A673 (cell line): ENCODE measurements at regions of chr3 and their contacts with region 1.

Region 1: DNA sequence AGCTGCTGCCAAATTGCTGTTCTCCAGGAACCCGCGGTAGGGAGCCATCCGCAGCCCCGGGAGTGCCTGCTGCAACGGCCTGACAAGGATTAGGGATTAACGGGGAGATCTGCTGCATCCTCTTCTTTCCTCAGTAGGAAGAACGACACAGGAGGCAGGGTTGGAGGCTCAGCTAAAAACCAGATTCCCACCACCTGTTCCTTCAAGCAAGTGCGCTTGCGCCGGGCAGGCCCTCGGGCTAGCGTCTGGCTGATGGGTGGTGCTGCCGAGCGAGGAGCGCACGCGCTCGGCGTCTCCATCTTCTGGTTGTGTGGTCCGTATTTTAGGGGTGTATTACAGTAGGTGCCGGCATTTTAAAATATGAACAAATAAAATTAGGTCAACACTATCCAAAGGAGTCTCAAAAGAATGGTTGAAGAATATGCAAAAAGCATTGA is 25.4 kb upstream of the SLC25A26 start:
- DNase-seq: peak; percentile 90
- H3K4me3 ChIP-seq: peak overlapping the region; percentile 43
- H3K27ac ChIP-seq: no peak overlapping the region
- H3K4me1 ChIP-seq: peaks cover 11% of the 10 kb centered on the region
- H3K27me3 ChIP-seq: no peaks in the 10 kb centered on the region
- CTCF ChIP-seq: peak; percentile 43

Region 2: GRCh38 chr3:65342084-65342683 is 853.2 kb before region 1 on chr3:
- CTCF ChIA-PET with region 1: no interaction called
- POLR2A ChIA-PET with region 1: no interaction called
- intact Hi-C with region 1: loop called (anchors 5 kb)
- DNase-seq: peak; percentile 59
- H3K4me3 ChIP-seq: no peak overlapping the region
- H3K27ac ChIP-seq: no peak overlapping the region
- H3K4me1 ChIP-seq: no peaks in the 10 kb centered on the region
- H3K27me3 ChIP-seq: no peaks in the 10 kb centered on the region
- CTCF ChIP-seq: peak; percentile 70

Region 3: DNA sequence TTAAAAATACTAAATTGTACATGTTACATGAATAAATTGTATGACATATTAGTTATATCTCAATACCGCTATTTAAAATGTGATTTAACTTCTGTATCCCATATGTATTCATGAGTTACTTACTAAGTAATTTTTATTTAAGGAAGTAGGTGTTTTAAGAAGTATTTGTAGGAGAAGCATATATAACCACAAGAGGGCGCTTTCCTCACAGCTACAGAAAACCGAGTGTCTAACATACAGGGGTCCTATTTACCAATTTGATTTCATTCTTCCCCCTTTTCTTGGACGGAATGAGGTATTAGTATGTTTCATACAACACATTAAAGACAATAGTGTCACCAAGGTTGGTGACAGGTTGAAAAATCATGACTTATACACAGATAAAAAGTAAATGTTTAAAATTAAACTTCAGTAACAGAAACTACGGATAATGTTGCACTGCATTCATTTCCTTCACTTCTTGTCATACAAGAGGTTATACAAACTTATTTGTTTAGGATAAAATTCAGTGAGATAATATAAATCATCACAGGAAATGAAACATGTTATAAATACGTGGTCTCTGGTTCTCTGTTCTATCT is 410.2 kb before region 1 on chr3:
- CTCF ChIA-PET with region 1: no interaction called
- POLR2A ChIA-PET with region 1: no interaction called
- intact Hi-C with region 1: loop called (anchors 5 kb)
- DNase-seq: peak; percentile 75
- H3K4me3 ChIP-seq: no peak overlapping the region
- H3K27ac ChIP-seq: peak overlapping the region; percentile 57
- H3K4me1 ChIP-seq: peaks cover 39% of the 10 kb centered on the region
- H3K27me3 ChIP-seq: no peaks in the 10 kb centered on the region
- CTCF ChIP-seq: peak; percentile 60

Region 4: DNA sequence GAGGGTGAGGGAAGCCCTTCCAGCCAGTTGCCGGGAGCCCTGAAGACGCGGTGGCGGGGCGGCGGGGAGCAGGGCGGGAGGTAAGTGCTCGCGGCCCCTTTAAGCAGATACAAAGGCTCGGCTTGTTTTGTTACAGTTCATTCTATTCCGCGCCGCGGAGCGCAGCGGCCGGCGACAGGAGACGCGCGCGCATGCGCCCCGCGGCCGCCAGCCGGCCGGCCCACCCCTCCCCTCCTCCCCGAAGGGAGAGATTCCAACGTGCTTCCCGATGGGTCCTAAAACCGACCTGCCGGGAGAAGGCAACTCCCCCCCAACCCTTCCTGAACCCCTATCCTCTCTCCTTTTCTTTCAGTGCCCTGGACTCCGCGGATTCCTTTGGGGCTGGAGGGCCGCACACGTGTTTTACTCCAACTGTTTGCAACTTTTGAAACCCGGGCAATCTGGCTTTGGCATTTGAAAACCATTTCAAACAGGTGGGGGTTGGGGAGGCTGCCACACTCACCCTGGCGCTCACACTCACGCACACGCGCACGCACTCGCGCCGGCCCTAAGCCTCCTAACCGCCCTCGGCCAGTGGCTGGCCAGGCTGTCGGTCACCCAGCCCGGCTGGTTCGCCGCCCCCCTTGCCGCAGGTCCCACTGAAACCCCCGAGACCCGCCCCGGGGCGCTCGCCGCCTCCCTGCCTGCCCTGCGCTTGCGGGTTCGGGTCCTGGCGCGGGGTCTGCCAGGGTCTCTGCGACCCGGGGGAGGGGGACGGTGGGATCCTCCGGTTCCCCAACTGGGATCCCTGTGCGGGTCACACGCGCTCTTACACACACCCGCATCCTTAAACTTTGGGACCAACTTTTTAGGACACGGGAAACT is 156.4 kb before region 1 on chr3 and contains the start of gene MAGI1:
- CTCF ChIA-PET with region 1: no interaction called
- POLR2A ChIA-PET with region 1: no interaction called
- intact Hi-C with region 1: loop called (anchors 10 kb)
- DNase-seq: peak; percentile 91
- H3K4me3 ChIP-seq: peak within 1 kb of the TSS; percentile 85
- H3K27ac ChIP-seq: peak within 1 kb of the TSS; percentile 91
- H3K4me1 ChIP-seq: no peaks in the 10 kb centered on the region
- H3K27me3 ChIP-seq: no peaks in the 10 kb centered on the region
- CTCF ChIP-seq: no peak
- total RNA-seq, gene MAGI1: 30.5 and 36.1 TPM in 2 replicates

Region 5: DNA sequence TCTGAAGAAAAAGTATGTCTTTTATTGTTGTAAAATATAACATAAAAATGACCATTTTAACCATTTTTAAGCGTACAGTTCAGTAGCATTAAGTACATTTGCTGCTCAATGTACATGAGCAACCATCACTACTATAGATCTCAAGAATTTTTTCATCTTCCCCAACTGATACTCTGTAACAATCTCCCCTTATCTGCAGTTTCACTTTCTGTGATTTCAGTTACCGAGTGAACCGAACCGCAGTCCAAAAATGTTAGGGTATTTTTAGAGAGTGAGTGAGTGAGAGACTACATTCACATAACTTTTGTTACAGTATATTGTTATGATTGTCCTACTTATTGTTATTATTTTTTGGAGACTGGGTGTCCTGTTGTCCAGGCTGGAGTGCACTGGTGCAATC is 16.4 kb after region 1 on chr3:
- CTCF ChIA-PET with region 1: interaction called, 10 read pairs
- POLR2A ChIA-PET with region 1: no interaction called
- intact Hi-C with region 1: no loop called
- DNase-seq: no peak
- H3K4me3 ChIP-seq: no peak overlapping the region
- H3K27ac ChIP-seq: no peak overlapping the region
- H3K4me1 ChIP-seq: no peaks in the 10 kb centered on the region
- H3K27me3 ChIP-seq: no peaks in the 10 kb centered on the region
- CTCF ChIP-seq: no peak